ENCODE measurements at regions of chr6 and their contacts with region 1.

Region 1: GRCh38 chr6:52647199-52647598 is 23.7 kb upstream of the TMEM14A start:
- DNase-seq: no peak
- H3K4me3 ChIP-seq: no peak overlapping the region
- CTCF ChIP-seq: no peak

Region 2: GRCh38 chr6:52407467-52407866 is 239.7 kb before region 1 on chr6:
- CTCF ChIA-PET with region 1: interaction called, 30 read pairs
- POLR2A ChIA-PET with region 1: no interaction called
- DNase-seq: no peak
- H3K4me3 ChIP-seq: no peak overlapping the region
- CTCF ChIP-seq: peak; percentile 47

Region 3: DNA sequence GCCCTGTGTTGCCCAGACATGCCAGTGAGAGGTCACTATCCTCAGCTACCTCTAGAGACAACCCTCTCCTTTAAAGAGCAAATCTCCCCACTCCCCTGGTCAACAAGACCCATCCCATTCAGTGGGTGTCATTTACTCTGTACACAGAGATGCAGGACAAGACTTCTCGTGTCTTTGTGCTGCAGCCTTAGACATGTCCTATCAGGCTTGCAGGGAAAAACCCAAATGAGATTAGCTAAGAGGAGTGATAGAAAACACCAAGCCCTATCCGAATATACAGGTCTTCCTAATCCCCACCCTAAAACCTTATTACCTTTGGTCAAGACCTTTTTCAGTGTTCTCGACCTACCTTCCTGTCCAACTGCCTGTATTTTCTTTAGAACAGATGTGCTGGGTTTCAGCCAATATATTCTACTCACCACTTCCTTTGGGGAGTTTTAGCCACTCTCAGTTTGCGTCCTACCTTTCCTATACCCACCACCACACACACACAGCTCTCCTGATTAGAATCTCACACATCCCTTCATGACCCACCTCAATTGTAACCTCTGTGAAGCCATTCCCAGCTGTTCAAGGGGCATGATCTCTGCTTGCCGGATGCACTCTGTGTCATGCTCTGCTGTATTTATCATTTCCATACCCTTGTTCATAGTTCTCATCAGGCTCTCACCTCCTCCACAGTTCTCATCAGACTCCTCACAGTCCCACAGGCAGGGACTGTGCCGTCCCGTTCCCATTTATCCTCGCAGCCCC is 110.0 kb before region 1 on chr6:
- CTCF ChIA-PET with region 1: interaction called, 31 read pairs
- POLR2A ChIA-PET with region 1: no interaction called
- DNase-seq: no peak
- H3K4me3 ChIP-seq: no peak overlapping the region
- CTCF ChIP-seq: no peak

Region 4: DNA sequence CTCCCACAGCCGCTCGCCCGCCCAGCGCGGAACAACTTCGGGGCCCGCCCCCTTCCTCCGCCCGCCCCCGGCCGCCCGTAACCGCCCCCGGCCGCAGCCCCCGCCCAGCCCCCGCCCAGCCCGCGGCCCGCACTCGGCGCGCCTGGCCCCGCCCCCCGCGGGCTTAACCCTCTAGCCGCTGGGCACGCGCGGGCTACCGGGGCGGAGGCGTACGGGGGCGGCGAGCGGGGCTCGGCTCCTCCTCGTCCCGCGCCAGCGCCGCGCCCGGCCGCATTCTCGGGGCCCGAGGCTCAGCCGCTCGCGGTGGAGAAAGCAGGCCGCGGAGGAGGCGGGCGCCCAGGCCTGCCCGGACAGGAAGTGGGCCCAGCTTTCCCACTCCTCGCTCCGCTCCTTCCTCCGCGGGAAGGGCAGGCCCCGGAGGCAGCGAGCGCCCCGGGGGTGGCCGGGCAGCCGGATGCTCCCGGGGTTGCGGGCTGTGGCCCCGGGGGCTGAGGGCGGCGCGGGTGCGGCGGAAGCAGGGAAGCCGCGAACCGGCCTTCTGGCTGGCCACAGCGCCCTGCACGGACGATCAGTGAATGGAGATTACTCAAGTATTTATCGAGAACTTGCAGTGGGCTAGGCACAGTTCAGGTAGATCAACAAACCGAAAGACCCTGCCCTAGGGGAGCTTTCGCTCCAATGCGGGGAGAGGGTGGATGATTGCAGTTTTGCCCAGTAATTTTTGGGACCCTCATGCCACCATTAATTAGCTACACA is 70.0 kb before region 1 on chr6 and contains the start of gene TRAM2:
- CTCF ChIA-PET with region 1: interaction called, 23 read pairs
- POLR2A ChIA-PET with region 1: no interaction called
- DNase-seq: no peak
- H3K4me3 ChIP-seq: peak within 1 kb of the TSS; percentile 95
- CTCF ChIP-seq: no peak

Region 5: DNA sequence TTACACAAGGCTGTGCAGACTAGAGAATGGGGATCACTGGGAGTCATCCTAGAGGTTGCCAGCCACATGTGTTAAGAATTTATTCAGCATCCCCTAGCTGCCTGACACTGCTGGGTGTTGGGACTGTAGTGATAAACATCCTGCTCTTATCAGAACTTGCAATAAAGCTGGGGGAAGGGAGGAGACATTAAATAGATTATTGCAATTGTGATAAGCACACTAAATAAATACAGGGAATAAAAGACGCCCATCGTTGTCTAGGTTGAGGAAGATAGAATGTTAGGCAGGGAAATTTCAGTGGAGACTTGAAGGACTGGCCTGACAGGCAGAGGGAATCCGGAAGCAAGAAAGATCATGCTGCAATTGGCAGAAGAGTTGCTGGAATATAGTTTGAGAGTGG is 37.2 kb before region 1 on chr6:
- CTCF ChIA-PET with region 1: interaction called, 13 read pairs
- POLR2A ChIA-PET with region 1: no interaction called
- DNase-seq: no peak
- H3K4me3 ChIP-seq: no peak overlapping the region
- CTCF ChIP-seq: no peak

Measured in AG04449 (cell line).